ENCODE measurements at regions of chr2 and their contacts with region 1.

Region 1: GRCh38 chr2:120312861-120313694 is 32.9 kb upstream of the INHBB start:
- DNase-seq: peak; percentile 44 to 78
- ATAC-seq: peak; percentile 86 to 89
- H3K4me3 ChIP-seq: peak overlapping the region; percentile 35
- H3K27ac ChIP-seq: peak overlapping the region; percentile 33 to 60; a peak in 4 of 6 replicates
- H3K4me1 ChIP-seq: 0 out of 3 replicates have a peak, but pooled peaks cover 3% of the 10 kb centered on the region
- CTCF ChIP-seq: peak; percentile 99
- EP300 ChIP-seq: no peak
- POLR2A ChIP-seq: no peak
- RAD21 ChIP-seq: peak; percentile 96 to 97

Region 2: DNA sequence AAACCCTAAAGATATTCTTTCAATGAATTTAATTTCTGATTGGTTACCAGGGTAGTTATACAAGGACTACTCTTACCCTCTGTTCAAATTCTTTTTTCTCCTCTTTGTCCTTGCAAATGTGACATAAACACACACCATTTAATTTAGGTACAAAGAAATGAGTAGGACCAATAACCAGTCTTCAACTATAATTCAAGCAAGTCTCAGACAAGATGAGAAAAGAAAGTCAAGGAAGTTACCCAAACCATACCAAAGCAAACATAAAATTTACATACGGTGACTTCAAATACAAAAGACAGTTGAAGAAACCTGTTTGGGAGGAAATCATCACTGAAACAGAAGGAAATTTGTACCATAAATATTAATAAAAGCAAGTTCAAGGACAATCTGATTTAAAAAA is 391.3 kb before region 1 on chr2:
- CTCF ChIA-PET with region 1: no interaction called
- POLR2A ChIA-PET with region 1: no interaction called
- DNase-seq: no peak
- ATAC-seq: no peak
- H3K4me3 ChIP-seq: no peak overlapping the region
- H3K27ac ChIP-seq: no peak overlapping the region
- H3K4me1 ChIP-seq: no peaks in the 10 kb centered on the region
- CTCF ChIP-seq: no peak
- EP300 ChIP-seq: no peak
- POLR2A ChIP-seq: no peak
- RAD21 ChIP-seq: no peak

Region 3: DNA sequence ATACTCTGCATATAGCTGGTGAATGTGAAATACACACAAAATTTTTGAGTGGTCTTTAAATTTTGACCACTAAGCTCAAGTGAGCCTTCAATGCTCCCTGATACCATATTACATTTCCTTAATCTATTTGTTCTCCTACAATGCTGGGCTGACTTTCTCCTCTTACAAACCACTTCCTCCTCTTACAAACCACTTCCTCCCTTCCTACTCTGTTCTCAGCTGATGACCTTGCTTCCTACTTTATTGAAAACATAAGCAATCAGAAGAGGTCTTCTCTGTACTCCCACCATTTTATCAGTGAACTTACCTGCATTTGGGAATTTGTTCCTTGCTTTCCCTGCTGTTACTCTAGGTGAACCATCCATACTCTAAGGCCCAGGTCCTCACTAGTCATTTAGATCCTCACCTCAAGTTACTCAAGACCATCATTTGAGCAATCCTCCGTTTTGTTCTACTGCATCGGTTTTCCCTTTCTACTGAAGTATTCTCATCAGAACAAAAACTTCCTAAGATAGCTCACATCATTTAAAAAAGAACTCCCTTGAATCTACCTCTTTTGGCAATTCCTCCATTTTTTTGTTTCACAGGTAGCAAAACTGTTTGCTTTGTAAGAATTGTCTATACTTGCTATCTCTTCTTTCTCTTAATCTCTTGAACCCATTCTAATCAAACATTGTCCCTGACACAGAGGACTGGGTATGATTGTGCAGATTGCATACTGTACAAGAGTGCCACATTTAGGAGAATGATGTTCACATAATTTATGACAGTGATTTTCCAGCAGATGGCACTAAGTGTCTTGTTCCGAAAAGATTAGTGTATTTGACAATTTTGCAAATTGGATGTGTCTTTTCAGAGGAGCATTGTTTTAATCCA is 203.7 kb before region 1 on chr2:
- CTCF ChIA-PET with region 1: interaction called, 33 read pairs
- POLR2A ChIA-PET with region 1: no interaction called
- DNase-seq: peak; percentile 33 to 54
- ATAC-seq: peak; percentile 66 to 83; a peak in 5 of 6 replicates
- H3K4me3 ChIP-seq: no peak overlapping the region
- H3K27ac ChIP-seq: peak overlapping the region in 1 of 2 experiments; percentile 22; a peak in 1 of 6 replicates
- H3K4me1 ChIP-seq: peaks cover 18% of the 10 kb centered on the region; the same call in 2 of the 3 replicates
- CTCF ChIP-seq: peak; percentile 81
- EP300 ChIP-seq: no peak
- POLR2A ChIP-seq: no peak
- RAD21 ChIP-seq: peak; percentile 78 to 84

Region 4: GRCh38 chr2:120228531-120228930 is 84.5 kb before region 1 on chr2:
- CTCF ChIA-PET with region 1: interaction called, 20 read pairs
- POLR2A ChIA-PET with region 1: interaction called, 4 read pairs
- DNase-seq: no peak
- ATAC-seq: no peak
- H3K4me3 ChIP-seq: no peak overlapping the region
- H3K27ac ChIP-seq: no peak overlapping the region
- H3K4me1 ChIP-seq: peaks cover 22% of the 10 kb centered on the region
- CTCF ChIP-seq: no peak; the same call in 2 of the 3 replicates
- EP300 ChIP-seq: no peak
- POLR2A ChIP-seq: no peak
- RAD21 ChIP-seq: peak; percentile 42 to 45; a peak in 4 of 5 replicates

Region 5: GRCh38 chr2:120252225-120253021 is 60.7 kb before region 1 on chr2 and contains the start of gene RALB:
- CTCF ChIA-PET with region 1: interaction called, 23 read pairs
- POLR2A ChIA-PET with region 1: interaction called, 3 read pairs
- DNase-seq: peak; percentile 96
- ATAC-seq: peak; percentile 90 to 94
- H3K4me3 ChIP-seq: peak within 1 kb of the TSS; percentile 79
- H3K27ac ChIP-seq: peak within 1 kb of the TSS; percentile 92 to 98
- H3K4me1 ChIP-seq: peaks cover 11% of the 10 kb centered on the region
- CTCF ChIP-seq: no peak
- EP300 ChIP-seq: no peak
- POLR2A ChIP-seq: peak; percentile 56
- RAD21 ChIP-seq: no peak
- polyA plus RNA-seq, gene RALB: 65.9 and 72.9 TPM in 2 replicates

Region 6: DNA sequence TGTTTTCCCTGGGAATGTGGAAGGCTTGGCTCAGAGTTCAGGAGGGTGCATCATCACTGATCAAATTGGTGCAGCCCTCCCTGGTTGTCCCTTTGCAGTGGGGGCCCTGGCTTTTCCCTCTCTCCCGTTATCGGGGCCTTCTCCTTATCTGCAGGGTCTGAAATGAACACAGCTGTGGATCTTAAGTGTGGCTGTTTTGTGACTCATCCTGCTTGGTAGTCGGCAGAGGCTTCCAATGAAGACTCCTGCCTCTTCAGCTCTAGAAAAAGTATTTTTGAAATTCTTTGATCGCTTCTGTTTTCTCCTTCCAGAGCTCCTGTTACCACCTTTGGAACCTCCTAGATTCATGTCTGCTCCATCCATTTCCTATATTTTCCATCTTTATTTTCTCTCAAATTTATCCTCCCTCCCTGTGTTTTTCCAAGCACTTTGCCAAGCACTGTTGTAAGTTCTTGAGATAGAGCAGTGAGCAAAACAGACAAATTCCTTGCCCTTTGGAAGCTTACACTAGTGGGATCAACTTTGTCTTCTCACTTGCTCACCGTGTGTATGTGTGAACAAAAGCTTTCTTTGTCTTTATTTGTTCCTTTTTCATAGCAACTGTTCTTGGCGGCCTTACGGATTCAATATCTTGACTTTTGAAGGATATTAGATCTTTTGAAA is 14.8 kb before region 1 on chr2:
- CTCF ChIA-PET with region 1: interaction called, 29 read pairs
- POLR2A ChIA-PET with region 1: no interaction called
- DNase-seq: no peak
- ATAC-seq: no peak
- H3K4me3 ChIP-seq: no peak overlapping the region
- H3K27ac ChIP-seq: no peak overlapping the region
- H3K4me1 ChIP-seq: no peaks in the 10 kb centered on the region
- CTCF ChIP-seq: no peak
- EP300 ChIP-seq: no peak
- POLR2A ChIP-seq: no peak
- RAD21 ChIP-seq: no peak

Region 7: GRCh38 chr2:120323214-120323613 is 10.1 kb after region 1 on chr2:
- CTCF ChIA-PET with region 1: interaction called, 12 read pairs
- POLR2A ChIA-PET with region 1: no interaction called
- DNase-seq: no peak
- ATAC-seq: no peak; a peak in 1 of 6 replicates
- H3K4me3 ChIP-seq: no peak overlapping the region
- H3K27ac ChIP-seq: no peak overlapping the region
- H3K4me1 ChIP-seq: no peaks in the 10 kb centered on the region
- CTCF ChIP-seq: no peak
- EP300 ChIP-seq: no peak
- POLR2A ChIP-seq: no peak
- RAD21 ChIP-seq: no peak

Region 8: GRCh38 chr2:120352701-120353590 is 39.9 kb after region 1 on chr2:
- CTCF ChIA-PET with region 1: no interaction called
- POLR2A ChIA-PET with region 1: no interaction called
- DNase-seq: no peak
- ATAC-seq: no peak
- H3K4me3 ChIP-seq: no peak overlapping the region
- H3K27ac ChIP-seq: peak overlapping the region in 1 of 2 experiments; percentile 52; a peak in 1 of 6 replicates
- H3K4me1 ChIP-seq: peaks cover 22% of the 10 kb centered on the region
- CTCF ChIP-seq: no peak
- EP300 ChIP-seq: no peak
- POLR2A ChIP-seq: no peak
- RAD21 ChIP-seq: no peak

Region 9: GRCh38 chr2:120680136-120680761 is 367.2 kb after region 1 on chr2:
- CTCF ChIA-PET with region 1: interaction called, 51 read pairs
- POLR2A ChIA-PET with region 1: no interaction called
- DNase-seq: peak; percentile 76 to 91
- ATAC-seq: peak; percentile 71 to 91
- H3K4me3 ChIP-seq: no peak overlapping the region
- H3K27ac ChIP-seq: no peak overlapping the region
- H3K4me1 ChIP-seq: no peaks in the 10 kb centered on the region
- CTCF ChIP-seq: peak; percentile 57
- EP300 ChIP-seq: no peak
- POLR2A ChIP-seq: no peak
- RAD21 ChIP-seq: peak; percentile 90 to 94

Measured in A549 (cell line).